B cell (primary cell): ENCODE measurements at regions of chr15 and their contacts with region 1.

Region 1: DNA sequence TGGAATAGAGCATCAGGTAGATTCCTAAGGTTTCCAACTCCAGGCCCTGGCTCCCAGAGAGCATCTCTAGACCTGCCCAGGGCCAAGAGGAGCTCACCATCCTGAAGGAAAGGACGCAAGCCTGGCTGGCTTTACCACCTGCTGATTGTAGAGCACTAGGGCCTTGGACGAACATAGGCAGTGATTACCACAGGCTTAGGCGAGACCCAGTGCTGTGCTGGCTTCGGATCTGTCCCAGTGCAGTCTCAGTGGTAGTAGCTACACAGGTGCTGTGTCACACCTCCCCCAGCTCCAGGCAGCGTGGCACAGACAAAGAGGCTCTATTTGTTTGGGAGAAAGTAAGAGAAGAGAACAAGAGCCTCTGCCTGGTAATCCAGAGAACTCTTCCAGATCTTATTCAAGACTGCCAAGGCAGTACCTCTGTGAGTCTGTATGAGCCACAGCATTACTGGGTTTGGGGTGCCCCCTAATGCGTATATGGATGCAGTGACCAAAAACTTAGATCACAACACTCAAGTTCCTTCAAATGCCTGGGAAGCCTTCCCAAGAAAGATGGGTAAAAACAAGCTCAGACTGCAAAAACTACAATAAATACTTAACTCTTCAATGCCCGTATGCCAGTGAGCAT is 25.4 kb downstream of the ISG20 start:
- DNase-seq: peak; percentile 72
- ATAC-seq: peak; percentile 79
- H3K4me3 ChIP-seq: no peak overlapping the region
- H3K4me3 Mint-ChIP-seq: no peak overlapping the region
- H3K27ac ChIP-seq: no peak overlapping the region
- H3K27ac Mint-ChIP-seq: peak overlapping the region; percentile 78
- H3K4me1 ChIP-seq: peaks cover 13 to 14% of the 10 kb centered on the region in 2 donors
- H3K4me1 Mint-ChIP-seq: peaks cover 25% of the 10 kb centered on the region
- H3K27me3 ChIP-seq: no peaks in the 10 kb centered on the region
- H3K27me3 Mint-ChIP-seq: peaks cover 7% of the 10 kb centered on the region
- CTCF ChIP-seq: peak; percentile 68

Region 2: DNA sequence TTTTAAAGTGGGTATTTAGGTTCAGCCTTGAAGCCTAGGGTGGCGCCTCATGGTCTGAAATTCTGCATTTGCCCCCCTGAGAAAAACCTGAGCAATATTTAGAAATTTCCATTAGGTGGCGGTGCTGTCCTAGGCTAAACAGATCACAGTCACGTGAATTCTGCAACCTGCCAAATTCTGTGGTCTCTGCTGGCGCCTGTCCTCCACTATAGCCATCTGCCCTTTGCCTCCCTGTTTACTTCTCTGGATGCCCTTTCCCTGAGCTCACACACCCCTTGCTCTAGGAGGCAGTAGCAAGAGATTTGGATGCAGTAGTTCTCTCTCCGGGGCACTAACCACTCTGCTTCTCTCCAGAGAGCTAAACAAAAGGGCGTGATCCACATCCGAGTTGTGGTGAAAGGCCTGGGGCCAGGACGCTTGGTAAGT is 187.6 kb before region 1 on chr15:
- CTCF ChIA-PET with region 1: interaction called, 3 read pairs
- POLR2A ChIA-PET with region 1: no interaction called
- intact Hi-C with region 1: loop called (anchors 2 kb)
- DNase-seq: peak; percentile 43
- ATAC-seq: no peak
- H3K4me3 ChIP-seq: no peak overlapping the region
- H3K4me3 Mint-ChIP-seq: no peak overlapping the region
- H3K27ac ChIP-seq: no peak overlapping the region
- H3K27ac Mint-ChIP-seq: no peak overlapping the region
- H3K4me1 ChIP-seq: no peaks in the 10 kb centered on the region
- H3K4me1 Mint-ChIP-seq: peaks cover 3% of the 10 kb centered on the region
- H3K27me3 ChIP-seq: no peaks in the 10 kb centered on the region
- H3K27me3 Mint-ChIP-seq: no peaks in the 10 kb centered on the region
- CTCF ChIP-seq: peak; percentile 56

Region 3: DNA sequence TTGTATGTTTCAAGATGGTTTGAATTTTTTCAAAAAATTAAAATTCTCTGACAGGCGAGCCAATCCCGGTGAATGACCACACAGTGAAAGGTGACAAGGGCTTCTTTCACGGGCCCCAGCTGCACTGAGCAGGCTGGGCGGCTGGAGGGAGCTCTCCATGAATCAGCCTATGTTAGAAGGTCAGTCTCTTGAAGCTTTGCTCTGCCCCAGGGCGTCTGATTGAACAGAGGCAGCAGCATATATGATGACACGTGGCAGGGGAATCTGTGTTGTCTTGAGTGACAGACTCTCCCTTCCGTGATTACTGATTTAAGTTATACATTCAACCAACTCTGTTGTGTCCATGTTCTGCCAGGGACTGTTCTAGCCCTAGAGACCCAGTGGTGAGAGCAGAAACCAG is 26.1 kb after region 1 on chr15:
- CTCF ChIA-PET with region 1: no interaction called
- POLR2A ChIA-PET with region 1: no interaction called
- intact Hi-C with region 1: no loop called
- DNase-seq: no peak
- ATAC-seq: no peak
- H3K4me3 ChIP-seq: no peak overlapping the region
- H3K4me3 Mint-ChIP-seq: no peak overlapping the region
- H3K27ac ChIP-seq: no peak overlapping the region
- H3K27ac Mint-ChIP-seq: no peak overlapping the region
- H3K4me1 ChIP-seq: no peaks in the 10 kb centered on the region
- H3K4me1 Mint-ChIP-seq: no peaks in the 10 kb centered on the region
- H3K27me3 ChIP-seq: peaks cover 0 to 10% (median 5%) of the 10 kb centered on the region in 4 experiments
- H3K27me3 Mint-ChIP-seq: peaks cover 30% of the 10 kb centered on the region
- CTCF ChIP-seq: no peak

Region 4: GRCh38 chr15:88859550-88859949 is 195.3 kb after region 1 on chr15:
- CTCF ChIA-PET with region 1: no interaction called
- POLR2A ChIA-PET with region 1: no interaction called
- intact Hi-C with region 1: no loop called
- DNase-seq: no peak
- ATAC-seq: no peak
- H3K4me3 ChIP-seq: no peak overlapping the region
- H3K4me3 Mint-ChIP-seq: no peak overlapping the region
- H3K27ac ChIP-seq: no peak overlapping the region
- H3K27ac Mint-ChIP-seq: no peak overlapping the region
- H3K4me1 ChIP-seq: no peaks in the 10 kb centered on the region
- H3K4me1 Mint-ChIP-seq: no peaks in the 10 kb centered on the region
- H3K27me3 ChIP-seq: peaks cover 0 to 5% (median 0%) of the 10 kb centered on the region in 4 experiments
- H3K27me3 Mint-ChIP-seq: peaks cover 7% of the 10 kb centered on the region
- CTCF ChIP-seq: no peak